ENCODE measurements at regions of chr14 and their contacts with region 1.

Region 1: GRCh38 chr14:101761032-101761880 is at the start of gene PPP2R5C:
- DNase-seq: peak; percentile 78 to 94 (median 86)
- ATAC-seq: peak; percentile 60
- H3K4me3 ChIP-seq: peak within 1 kb of the TSS; percentile 97
- H3K4me3 Mint-ChIP-seq: peak within 1 kb of the TSS; percentile 97
- H3K27ac ChIP-seq: peak within 1 kb of the TSS; percentile 79
- H3K27ac Mint-ChIP-seq: peak within 1 kb of the TSS; percentile 91
- H3K4me1 ChIP-seq: peaks cover 30% of the 10 kb centered on the region
- H3K4me1 Mint-ChIP-seq: peaks cover 43% of the 10 kb centered on the region
- H3K27me3 ChIP-seq: no peaks in the 10 kb centered on the region
- H3K27me3 Mint-ChIP-seq: no peaks in the 10 kb centered on the region
- CTCF ChIP-seq: no peak
- total RNA-seq, gene PPP2R5C: 463 to 487 TPM

Region 2: GRCh38 chr14:101654051-101654450 is 107.2 kb before region 1 on chr14:
- CTCF ChIA-PET with region 1: no interaction called
- POLR2A ChIA-PET with region 1: no interaction called
- intact Hi-C with region 1: no loop called
- DNase-seq: no peak
- ATAC-seq: no peak
- H3K4me3 ChIP-seq: no peak overlapping the region
- H3K4me3 Mint-ChIP-seq: no peak overlapping the region
- H3K27ac ChIP-seq: no peak overlapping the region
- H3K27ac Mint-ChIP-seq: no peak overlapping the region
- H3K4me1 ChIP-seq: no peaks in the 10 kb centered on the region
- H3K4me1 Mint-ChIP-seq: no peaks in the 10 kb centered on the region
- H3K27me3 ChIP-seq: peaks cover 0 to 6% of the 10 kb centered on the region in 2 experiments
- H3K27me3 Mint-ChIP-seq: peaks cover 46% of the 10 kb centered on the region
- CTCF ChIP-seq: no peak

Region 3: DNA sequence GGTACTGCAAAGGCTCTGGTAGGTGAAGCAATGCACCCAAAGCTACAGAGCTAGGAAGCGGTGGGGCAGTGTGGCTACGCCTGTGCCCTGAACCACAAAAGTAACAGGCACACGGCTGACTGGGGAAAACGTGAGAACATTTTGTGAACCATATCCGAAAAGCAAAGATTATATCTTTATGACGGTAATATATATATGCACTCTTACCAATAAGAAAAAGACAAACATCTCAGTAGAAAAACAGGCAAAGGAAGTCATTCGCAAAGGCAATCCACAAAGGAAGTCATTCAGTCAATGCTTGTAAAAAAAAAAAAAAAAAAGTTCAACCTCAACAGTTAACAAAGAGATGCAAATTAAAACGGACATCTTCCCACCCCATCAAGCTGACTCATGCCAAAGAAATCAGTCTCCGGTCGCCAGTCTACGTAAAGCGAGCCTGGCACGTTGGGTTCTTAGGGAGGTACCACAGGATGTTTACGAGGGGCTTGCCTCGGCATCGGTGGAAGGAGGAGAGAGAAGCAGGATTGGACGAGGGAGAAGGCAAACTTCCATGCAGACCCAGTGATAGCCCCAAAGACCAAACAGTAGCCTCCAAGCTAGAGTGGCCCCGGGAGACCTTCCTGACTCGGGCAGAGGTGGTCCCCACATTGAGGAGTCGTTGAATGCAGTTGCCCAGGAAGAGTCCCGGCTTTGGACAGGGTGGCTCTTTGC is 39.1 kb before region 1 on chr14:
- CTCF ChIA-PET with region 1: no interaction called
- POLR2A ChIA-PET with region 1: interaction called, 24 read pairs
- intact Hi-C with region 1: loop called (anchors 1 to 2 kb)
- DNase-seq: peak; percentile 65 to 95 (median 77)
- ATAC-seq: peak; percentile 77
- H3K4me3 ChIP-seq: peak overlapping the region; percentile 31
- H3K4me3 Mint-ChIP-seq: peak overlapping the region; percentile 70
- H3K27ac ChIP-seq: peak overlapping the region; percentile 84 to 87
- H3K27ac Mint-ChIP-seq: peak overlapping the region; percentile 95
- H3K4me1 ChIP-seq: peaks cover 61% of the 10 kb centered on the region
- H3K4me1 Mint-ChIP-seq: peaks cover 61% of the 10 kb centered on the region
- H3K27me3 ChIP-seq: no peaks in the 10 kb centered on the region
- H3K27me3 Mint-ChIP-seq: no peaks in the 10 kb centered on the region
- CTCF ChIP-seq: no peak

Region 4: GRCh38 chr14:101731187-101732080 is 29.8 kb before region 1 on chr14:
- CTCF ChIA-PET with region 1: interaction called, 3 read pairs
- POLR2A ChIA-PET with region 1: interaction called, 21 read pairs
- intact Hi-C with region 1: loop called (anchors 2 kb)
- DNase-seq: peak; percentile 53 to 94 (median 78)
- ATAC-seq: peak; percentile 90
- H3K4me3 ChIP-seq: peak overlapping the region; percentile 36
- H3K4me3 Mint-ChIP-seq: peak overlapping the region; percentile 73
- H3K27ac ChIP-seq: peak overlapping the region; percentile 87 to 88
- H3K27ac Mint-ChIP-seq: peak overlapping the region; percentile 100
- H3K4me1 ChIP-seq: peaks cover 26% of the 10 kb centered on the region
- H3K4me1 Mint-ChIP-seq: peaks cover 47% of the 10 kb centered on the region
- H3K27me3 ChIP-seq: no peaks in the 10 kb centered on the region
- H3K27me3 Mint-ChIP-seq: no peaks in the 10 kb centered on the region
- CTCF ChIP-seq: no peak

Region 5: GRCh38 chr14:101947906-101948665 is 186.8 kb after region 1 on chr14:
- CTCF ChIA-PET with region 1: no interaction called
- POLR2A ChIA-PET with region 1: interaction called, 3 read pairs
- intact Hi-C with region 1: loop called (anchors 1 to 2 kb)
- DNase-seq: peak; percentile 98 to 100 (median 99)
- ATAC-seq: peak; percentile 96
- H3K4me3 ChIP-seq: peak overlapping the region; percentile 78
- H3K4me3 Mint-ChIP-seq: peak overlapping the region; percentile 94
- H3K27ac ChIP-seq: peak overlapping the region; percentile 87 to 93
- H3K27ac Mint-ChIP-seq: peak overlapping the region; percentile 99
- H3K4me1 ChIP-seq: peaks cover 23% of the 10 kb centered on the region
- H3K4me1 Mint-ChIP-seq: peaks cover 18% of the 10 kb centered on the region
- H3K27me3 ChIP-seq: peaks cover 8 to 22% of the 10 kb centered on the region in 2 experiments
- H3K27me3 Mint-ChIP-seq: peaks cover 31% of the 10 kb centered on the region
- CTCF ChIP-seq: no peak

Region 6: GRCh38 chr14:102086972-102087761 is 325.9 kb after region 1 on chr14 and contains the start of gene HSP90AA1:
- CTCF ChIA-PET with region 1: no interaction called
- POLR2A ChIA-PET with region 1: no interaction called
- intact Hi-C with region 1: loop called in 1 of 2 experiments (anchors 5 kb)
- DNase-seq: peak; percentile 88 to 98 (median 94)
- ATAC-seq: peak; percentile 77
- H3K4me3 ChIP-seq: peak within 1 kb of the TSS; percentile 74
- H3K4me3 Mint-ChIP-seq: peak within 1 kb of the TSS; percentile 98
- H3K27ac ChIP-seq: peak within 1 kb of the TSS; percentile 95 to 98
- H3K27ac Mint-ChIP-seq: peak within 1 kb of the TSS; percentile 91
- H3K4me1 ChIP-seq: peaks cover 51% of the 10 kb centered on the region
- H3K4me1 Mint-ChIP-seq: peaks cover 64% of the 10 kb centered on the region
- H3K27me3 ChIP-seq: no peaks in the 10 kb centered on the region
- H3K27me3 Mint-ChIP-seq: no peaks in the 10 kb centered on the region
- CTCF ChIP-seq: no peak
- total RNA-seq, gene HSP90AA1: 451 to 462 TPM